Left ventricle myocardium inferior (tissue), 1 donor: ENCODE measurements at regions of chr2 and their contacts with region 1.

Region 1: DNA sequence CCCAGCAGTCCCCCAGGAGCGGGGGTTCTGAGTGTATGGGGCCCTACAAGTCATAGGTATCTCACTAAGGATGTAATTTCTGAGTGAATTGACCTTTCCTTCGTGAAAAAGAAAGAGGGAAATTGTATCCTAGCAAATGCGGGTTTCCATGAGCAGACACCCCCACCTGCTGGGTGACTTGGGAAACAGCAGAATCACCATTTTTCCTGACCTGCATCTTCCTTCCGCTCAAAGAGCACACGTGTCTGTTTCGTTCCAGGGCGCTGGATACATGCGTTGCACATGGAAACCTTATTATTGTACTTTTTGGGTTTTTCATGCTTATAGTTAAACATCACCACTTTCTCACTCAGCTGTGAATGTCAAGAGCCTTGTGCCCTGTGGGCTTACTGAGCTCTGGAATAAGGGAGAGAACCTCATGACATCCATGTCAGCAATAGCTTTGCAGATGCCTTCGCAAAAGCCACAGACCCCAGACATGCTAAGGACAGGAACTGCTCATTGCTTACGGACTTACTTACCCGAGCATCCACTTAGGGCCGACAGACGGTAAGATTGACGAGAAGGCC is 132.8 kb downstream of the TPO start:
- DNase-seq: no peak
- H3K4me3 ChIP-seq: no peak overlapping the region
- H3K27ac ChIP-seq: no peak overlapping the region
- H3K4me1 ChIP-seq: peaks cover 16% of the 10 kb centered on the region
- H3K27me3 ChIP-seq: peaks cover 34% of the 10 kb centered on the region
- CTCF ChIP-seq: peak; percentile 87

Region 2: DNA sequence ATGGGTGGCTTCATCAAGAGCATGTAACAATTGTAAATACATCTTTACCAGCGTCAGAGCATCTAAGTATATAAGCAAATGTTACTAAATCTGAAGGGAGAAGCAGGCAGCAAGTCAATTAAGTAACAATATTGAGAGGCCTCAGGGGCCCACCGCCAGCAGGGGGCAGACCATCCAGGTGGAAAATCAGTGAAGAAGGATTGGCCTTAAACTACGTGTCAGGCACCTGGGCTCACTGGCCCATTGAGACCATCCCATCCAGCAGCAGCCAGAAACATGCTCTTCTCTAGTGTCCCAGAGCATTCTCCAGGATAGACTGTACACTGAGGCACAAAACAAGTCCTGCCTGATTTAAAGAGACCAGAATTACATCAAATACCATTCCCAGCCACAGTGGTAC is 691.6 kb before region 1 on chr2:
- intact Hi-C with region 1: loop called (anchors 10 kb)
- DNase-seq: peak; percentile 34
- H3K4me3 ChIP-seq: no peak overlapping the region
- H3K27ac ChIP-seq: no peak overlapping the region
- H3K4me1 ChIP-seq: no peaks in the 10 kb centered on the region
- H3K27me3 ChIP-seq: peaks cover 29% of the 10 kb centered on the region
- CTCF ChIP-seq: peak; percentile 70

Region 3: GRCh38 chr2:950080-950966 is 595.8 kb before region 1 on chr2 and contains the start of gene SNTG2:
- intact Hi-C with region 1: loop called (anchors 10 kb)
- DNase-seq: peak; percentile 35
- H3K4me3 ChIP-seq: peak within 1 kb of the TSS; percentile 69
- H3K27ac ChIP-seq: no peak within 1 kb of the TSS
- H3K4me1 ChIP-seq: peaks cover 16% of the 10 kb centered on the region
- H3K27me3 ChIP-seq: peaks cover 87% of the 10 kb centered on the region
- CTCF ChIP-seq: no peak
- total RNA-seq, gene SNTG2: 0.47 TPM

Region 4: GRCh38 chr2:1309507-1309906 is 236.6 kb before region 1 on chr2:
- intact Hi-C with region 1: no loop called
- DNase-seq: no peak
- H3K4me3 ChIP-seq: no peak overlapping the region
- H3K27ac ChIP-seq: no peak overlapping the region
- H3K4me1 ChIP-seq: no peaks in the 10 kb centered on the region
- H3K27me3 ChIP-seq: peaks cover 22% of the 10 kb centered on the region
- CTCF ChIP-seq: no peak